HEK293 (cell line): ENCODE measurements at regions of chr1 and their contacts with region 1.

Region 1: GRCh38 chr1:18956369-18957135 is at the start of gene IFFO2:
- H3K4me3 ChIP-seq: peak within 1 kb of the TSS; percentile 80
- H3K27ac ChIP-seq: peak within 1 kb of the TSS; percentile 47; the same call in 1 of the 2 replicates
- H3K4me1 ChIP-seq: peaks cover 3% of the 10 kb centered on the region; the same call in 1 of the 2 replicates
- CTCF ChIP-seq: no peak

Region 2: GRCh38 chr1:18941221-18942141 is 15.1 kb before region 1 on chr1:
- CTCF ChIA-PET with region 1: interaction called, 5 read pairs
- POLR2A ChIA-PET with region 1: interaction called, 22 read pairs
- H3K4me3 ChIP-seq: no peak overlapping the region
- H3K27ac ChIP-seq: peak overlapping the region; percentile 7; the same call in 1 of the 2 replicates
- H3K4me1 ChIP-seq: peaks cover 21% of the 10 kb centered on the region
- CTCF ChIP-seq: no peak

Region 3: DNA sequence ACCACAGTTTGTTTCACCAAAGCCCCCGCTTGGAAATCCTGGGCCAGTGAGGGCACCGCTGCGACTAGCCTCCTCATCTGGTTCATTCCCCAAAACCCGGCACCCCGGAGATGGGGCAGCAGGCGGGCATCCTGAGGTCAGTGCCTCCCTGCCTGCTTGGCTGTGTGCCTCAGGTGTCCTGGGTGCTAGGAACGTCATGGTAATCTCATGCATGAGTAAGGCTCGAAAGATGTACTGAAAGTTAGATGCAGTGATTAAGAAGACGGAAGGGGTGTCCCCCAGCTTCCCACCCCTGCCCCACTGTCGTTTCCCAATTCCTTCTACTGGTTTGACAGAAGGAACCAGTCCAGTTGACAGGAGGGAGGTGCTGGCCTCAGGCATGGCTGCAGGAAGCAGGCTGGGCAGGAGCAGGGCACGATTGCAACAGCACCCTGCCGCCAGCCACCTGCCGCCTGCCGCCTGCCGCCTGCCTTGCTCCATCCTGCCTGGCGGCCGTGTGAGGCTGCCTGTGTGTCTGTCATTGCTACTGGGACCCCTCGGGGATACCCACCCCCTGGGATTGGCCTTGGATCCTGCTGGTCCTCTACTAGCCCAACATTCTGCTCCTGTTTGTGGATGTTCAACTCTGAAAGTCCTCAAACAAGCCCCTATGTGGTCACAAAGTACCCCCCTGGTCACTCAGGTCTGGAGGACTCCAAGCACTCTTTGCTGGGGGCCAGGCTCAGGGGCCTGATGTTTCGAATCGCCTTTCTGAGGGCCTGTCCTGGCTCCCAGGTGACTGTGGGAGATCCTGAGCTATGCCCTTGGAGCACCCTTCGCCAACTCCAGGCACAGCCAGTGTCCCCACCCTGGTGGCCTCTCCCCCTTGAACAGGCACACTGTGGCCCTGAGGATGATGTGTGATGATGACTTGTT is 72.9 kb after region 1 on chr1:
- CTCF ChIA-PET with region 1: no interaction called
- POLR2A ChIA-PET with region 1: no interaction called
- H3K4me3 ChIP-seq: no peak overlapping the region
- H3K27ac ChIP-seq: no peak overlapping the region
- H3K4me1 ChIP-seq: no peaks in the 10 kb centered on the region
- CTCF ChIP-seq: no peak